MCF 10A (cell line): ENCODE measurements at regions of chr1 and their contacts with region 1.

Region 1: DNA sequence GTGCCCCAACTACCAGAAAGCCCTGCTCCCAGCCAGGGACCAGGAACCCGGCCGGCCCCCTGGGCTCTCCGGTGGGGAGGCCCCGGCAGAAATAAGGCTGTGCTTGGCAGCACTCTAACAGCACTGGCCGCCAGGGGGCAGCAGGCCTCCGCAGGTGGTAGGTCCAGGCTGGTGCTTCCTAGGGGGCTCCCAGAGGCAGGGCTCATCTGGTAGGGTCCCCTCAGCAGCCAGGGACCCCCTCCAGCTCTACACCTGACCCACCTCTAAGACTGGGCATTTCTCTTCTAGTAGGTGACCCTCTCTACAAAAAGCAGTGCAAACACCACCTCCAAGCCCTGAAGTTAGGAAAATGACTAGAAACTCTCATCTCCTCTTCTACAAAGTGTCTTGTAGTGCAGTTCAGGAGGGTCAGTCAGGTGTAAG is 85.6 kb downstream of the STUM start:
- DNase-seq: peak; percentile 82
- H3K4me3 Mint-ChIP-seq: no peak overlapping the region
- H3K27ac Mint-ChIP-seq: no peak overlapping the region
- H3K4me1 Mint-ChIP-seq: peaks cover 20% of the 10 kb centered on the region
- H3K27me3 Mint-ChIP-seq: no peaks in the 10 kb centered on the region
- CTCF ChIP-seq: peak; percentile 100

Region 2: GRCh38 chr1:226547754-226548191 is 86.4 kb before region 1 on chr1:
- CTCF ChIA-PET with region 1: interaction called, 24 read pairs
- POLR2A ChIA-PET with region 1: interaction called, 3 read pairs
- intact Hi-C with region 1: loop called (anchors 1 kb)
- DNase-seq: peak; percentile 98
- H3K4me3 Mint-ChIP-seq: no peak overlapping the region
- H3K27ac Mint-ChIP-seq: no peak overlapping the region
- H3K4me1 Mint-ChIP-seq: peaks cover 14% of the 10 kb centered on the region
- H3K27me3 Mint-ChIP-seq: peaks cover 51% of the 10 kb centered on the region
- CTCF ChIP-seq: peak; percentile 99

Region 3: DNA sequence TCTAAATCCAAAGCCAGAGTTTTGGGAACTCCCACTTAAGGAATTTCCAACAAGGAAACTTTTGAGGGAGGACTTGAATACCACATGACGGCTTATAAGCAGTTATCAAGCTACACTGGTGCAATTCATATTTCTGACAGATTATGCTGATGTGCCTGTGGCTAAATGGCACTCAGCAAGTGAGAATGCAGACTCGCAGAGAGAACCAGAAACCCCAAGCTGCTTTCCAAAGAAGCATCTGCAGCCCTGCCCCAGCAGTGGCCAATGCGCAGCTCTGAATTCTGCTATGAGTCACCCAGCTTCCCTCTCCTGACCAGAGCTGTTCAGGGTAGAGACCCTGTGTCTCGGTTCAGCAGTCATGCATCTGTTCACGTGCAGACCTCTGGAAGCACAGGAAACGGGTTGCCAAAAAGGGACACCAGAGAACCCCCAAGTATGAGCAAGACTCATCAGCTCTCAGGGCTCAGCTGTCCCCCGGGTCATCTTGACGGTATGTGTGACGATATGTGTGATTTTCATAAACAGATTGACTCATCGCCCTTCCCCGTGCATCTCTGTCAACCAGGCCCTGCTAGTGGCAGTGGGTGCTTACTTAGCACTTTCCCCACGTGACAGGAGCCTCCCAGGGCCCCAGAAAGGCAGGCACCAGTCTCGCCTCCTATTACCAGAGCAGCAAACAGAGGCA is 28.6 kb after region 1 on chr1:
- CTCF ChIA-PET with region 1: interaction called, 57 read pairs
- POLR2A ChIA-PET with region 1: interaction called, 20 read pairs
- intact Hi-C with region 1: loop called (anchors 2 kb)
- DNase-seq: peak; percentile 95
- H3K4me3 Mint-ChIP-seq: peak overlapping the region; percentile 65
- H3K27ac Mint-ChIP-seq: peak overlapping the region; percentile 96
- H3K4me1 Mint-ChIP-seq: peaks cover 33% of the 10 kb centered on the region
- H3K27me3 Mint-ChIP-seq: no peaks in the 10 kb centered on the region
- CTCF ChIP-seq: no peak

Region 4: DNA sequence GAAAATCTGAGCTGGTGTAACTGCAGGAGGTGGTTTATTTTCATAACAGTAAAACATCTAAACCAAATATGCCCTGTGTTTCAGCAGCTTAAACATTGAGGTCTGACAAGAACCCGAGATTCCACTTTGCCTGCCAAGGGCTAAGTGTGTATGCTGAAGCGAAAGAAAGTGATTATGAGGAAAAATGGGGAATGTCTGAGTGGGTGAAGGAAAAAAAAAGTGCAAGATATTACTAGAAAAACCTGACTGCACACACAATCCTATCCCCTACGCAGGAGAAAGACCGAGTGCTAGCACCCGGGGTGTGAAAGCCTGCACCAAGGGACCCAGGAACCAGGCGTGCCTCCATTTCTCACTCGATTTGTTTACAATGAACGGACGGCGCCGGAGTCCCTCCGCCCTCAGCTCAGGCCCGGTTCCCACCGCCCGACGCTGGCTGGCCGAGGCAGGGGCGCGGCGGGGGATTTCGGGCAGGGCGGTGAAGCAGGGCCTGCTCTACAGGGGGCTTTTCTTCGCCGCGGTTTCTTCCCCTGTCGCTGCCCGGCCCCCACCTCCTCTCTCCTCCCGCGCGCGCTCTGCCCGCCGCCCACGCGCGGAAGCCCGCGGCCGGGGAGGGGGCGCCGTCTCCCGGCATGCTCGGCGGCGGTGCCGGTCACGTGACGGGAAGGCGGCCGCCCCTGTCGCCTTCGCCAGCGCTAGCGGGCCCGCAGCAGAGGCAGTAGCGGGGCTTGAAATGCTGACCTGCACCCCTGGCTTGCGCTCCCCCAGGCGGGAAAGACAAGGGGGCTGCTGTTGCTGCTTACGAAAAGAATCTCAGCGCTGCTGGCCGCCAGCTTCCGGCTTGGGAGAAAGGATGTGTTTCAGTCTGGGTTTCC is 69.0 kb after region 1 on chr1:
- CTCF ChIA-PET with region 1: interaction called, 25 read pairs
- POLR2A ChIA-PET with region 1: interaction called, 3 read pairs
- intact Hi-C with region 1: loop called (anchors 2 kb)
- DNase-seq: peak; percentile 75
- H3K4me3 Mint-ChIP-seq: peak overlapping the region; percentile 62
- H3K27ac Mint-ChIP-seq: peak overlapping the region; percentile 9
- H3K4me1 Mint-ChIP-seq: peaks cover 14% of the 10 kb centered on the region
- H3K27me3 Mint-ChIP-seq: no peaks in the 10 kb centered on the region
- CTCF ChIP-seq: no peak

Region 5: DNA sequence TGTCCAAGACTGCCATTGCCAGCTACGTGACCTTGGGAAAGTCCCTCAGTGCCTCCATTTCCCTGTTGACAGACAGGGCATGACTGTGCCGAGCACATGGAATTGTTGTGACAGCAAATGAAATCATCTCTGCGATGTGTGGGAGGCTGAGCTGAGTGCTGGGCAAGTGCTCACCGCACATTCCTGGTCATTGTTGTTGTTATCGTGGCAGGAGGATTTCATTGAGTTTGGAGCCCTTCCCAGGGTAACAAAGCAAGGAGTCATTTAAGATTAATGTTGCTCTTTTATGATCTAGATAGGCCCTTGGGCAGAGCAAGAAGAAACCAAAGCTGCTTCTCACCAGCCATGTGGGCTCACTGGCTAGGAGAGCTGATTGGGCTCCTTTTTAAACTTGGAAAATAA is 144.5 kb after region 1 on chr1:
- CTCF ChIA-PET with region 1: interaction called, 13 read pairs
- POLR2A ChIA-PET with region 1: interaction called, 3 read pairs
- intact Hi-C with region 1: no loop called
- DNase-seq: peak; percentile 99
- H3K4me3 Mint-ChIP-seq: no peak overlapping the region
- H3K27ac Mint-ChIP-seq: peak overlapping the region; percentile 65
- H3K4me1 Mint-ChIP-seq: peaks cover 16% of the 10 kb centered on the region
- H3K27me3 Mint-ChIP-seq: no peaks in the 10 kb centered on the region
- CTCF ChIP-seq: no peak

Region 6: DNA sequence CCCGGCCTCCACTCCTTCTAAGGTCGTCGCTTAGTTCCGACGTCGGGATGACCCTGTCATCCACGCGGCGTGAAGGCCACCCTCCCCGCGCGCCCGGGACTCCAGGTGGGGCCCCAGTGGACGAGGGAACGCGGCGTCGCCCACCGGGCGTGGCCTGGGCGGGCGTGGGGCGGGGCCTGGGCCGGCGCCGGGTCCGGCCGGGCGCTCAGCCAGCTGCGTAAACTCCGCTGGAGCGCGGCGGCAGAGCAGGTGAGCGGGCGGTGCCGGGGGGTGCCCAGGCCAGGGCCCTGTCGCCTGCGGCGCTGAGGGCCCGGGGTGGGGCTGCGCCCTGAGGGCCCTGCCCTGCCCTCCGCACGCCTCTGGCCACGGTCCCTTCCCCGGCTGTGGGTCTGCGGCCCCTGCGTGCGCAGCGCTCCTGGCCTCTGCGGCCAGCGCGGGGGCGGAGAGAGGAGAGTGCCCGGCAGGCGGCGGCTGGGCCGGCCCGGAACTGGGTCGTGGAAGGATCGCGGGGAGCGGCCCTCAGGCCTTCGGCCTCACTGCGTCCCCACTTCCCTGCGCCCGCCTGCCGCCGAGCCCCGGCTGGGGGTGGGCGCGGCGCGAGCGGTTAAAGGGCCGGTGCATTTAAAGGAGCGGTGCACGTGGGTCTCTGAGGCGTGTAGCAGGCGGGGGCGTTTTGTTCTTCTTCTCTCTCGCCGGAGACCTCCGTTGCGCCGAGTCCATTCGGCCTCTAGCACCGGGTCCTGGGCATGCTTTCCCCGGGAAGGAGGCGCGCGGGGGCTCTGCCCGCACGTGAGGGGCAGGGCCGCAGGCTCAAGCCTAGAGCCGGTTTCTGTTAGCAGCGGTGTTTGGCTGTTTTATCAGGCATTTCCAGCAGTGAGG is 236.5 kb after region 1 on chr1 and contains the start of gene PSEN2:
- CTCF ChIA-PET with region 1: interaction called, 10 read pairs
- POLR2A ChIA-PET with region 1: interaction called, 4 read pairs
- intact Hi-C with region 1: no loop called
- DNase-seq: peak; percentile 74
- H3K4me3 Mint-ChIP-seq: peak within 1 kb of the TSS; percentile 75
- H3K27ac Mint-ChIP-seq: peak within 1 kb of the TSS; percentile 79
- H3K4me1 Mint-ChIP-seq: peaks cover 45% of the 10 kb centered on the region
- H3K27me3 Mint-ChIP-seq: no peaks in the 10 kb centered on the region
- CTCF ChIP-seq: peak; percentile 53
- total RNA-seq, gene PSEN2: 31.3 and 31.8 TPM in 2 replicates